Activated naive CD4-positive, alpha-beta T cell treated with anti-CD3 and anti-CD28 coated beads for 36 hours (primary cell): ENCODE measurements at regions of chr9 and their contacts with region 1.

Region 1: GRCh38 chr9:127396808-127397497 is at the start of gene SLC2A8:
- DNase-seq: peak; percentile 92
- H3K4me3 Mint-ChIP-seq: peak within 1 kb of the TSS; percentile 61
- H3K27ac Mint-ChIP-seq: no peak within 1 kb of the TSS
- H3K4me1 Mint-ChIP-seq: peaks cover 9% of the 10 kb centered on the region
- H3K27me3 Mint-ChIP-seq: peaks cover 74% of the 10 kb centered on the region
- total RNA-seq, gene SLC2A8: 3.4 TPM

Region 2: GRCh38 chr9:127199001-127199791 is 197.8 kb before region 1 on chr9:
- CTCF ChIA-PET with region 1: no interaction called
- intact Hi-C with region 1: no loop called
- DNase-seq: peak; percentile 87
- H3K4me3 Mint-ChIP-seq: no peak overlapping the region
- H3K27ac Mint-ChIP-seq: no peak overlapping the region
- H3K4me1 Mint-ChIP-seq: peaks cover 3% of the 10 kb centered on the region
- H3K27me3 Mint-ChIP-seq: peaks cover 7% of the 10 kb centered on the region

Region 3: DNA sequence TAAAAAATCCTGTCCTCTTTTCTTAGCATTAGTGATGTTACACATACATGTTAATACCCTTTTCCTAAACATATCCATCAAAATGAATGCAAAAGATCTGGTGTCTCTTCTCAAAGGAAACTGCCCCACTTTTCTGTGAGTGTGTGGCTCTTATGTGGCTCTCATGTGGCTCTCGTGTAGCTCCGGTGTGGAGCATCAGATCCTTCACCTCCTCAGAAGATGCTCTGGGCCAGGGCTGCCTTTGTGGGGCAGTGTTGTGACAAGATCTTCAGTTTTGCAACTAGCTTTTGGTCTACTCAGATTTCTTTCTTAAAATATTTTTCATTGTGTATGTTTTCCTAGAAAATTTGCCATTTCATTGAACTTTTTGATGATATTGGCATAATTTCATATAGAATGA is 113.0 kb before region 1 on chr9:
- CTCF ChIA-PET with region 1: no interaction called
- intact Hi-C with region 1: loop called (anchors 1 kb)
- DNase-seq: peak; percentile 57
- H3K4me3 Mint-ChIP-seq: no peak overlapping the region
- H3K27ac Mint-ChIP-seq: no peak overlapping the region
- H3K4me1 Mint-ChIP-seq: no peaks in the 10 kb centered on the region
- H3K27me3 Mint-ChIP-seq: peaks cover 33% of the 10 kb centered on the region

Region 4: GRCh38 chr9:127360829-127361228 is 36.1 kb before region 1 on chr9:
- CTCF ChIA-PET with region 1: interaction called, 5 read pairs
- intact Hi-C with region 1: loop called (anchors 5 kb)
- DNase-seq: peak; percentile 27
- H3K4me3 Mint-ChIP-seq: no peak overlapping the region
- H3K27ac Mint-ChIP-seq: no peak overlapping the region
- H3K4me1 Mint-ChIP-seq: no peaks in the 10 kb centered on the region
- H3K27me3 Mint-ChIP-seq: peaks cover 17% of the 10 kb centered on the region